ENCODE measurements at regions of chr7 and their contacts with region 1.

Region 1: GRCh38 chr7:111561885-111562732 is at the start of gene IMMP2L:
- DNase-seq: peak; percentile 89
- H3K4me3 ChIP-seq: peak within 1 kb of the TSS; percentile 22 to 63 (median 57)
- H3K27ac ChIP-seq: peak within 1 kb of the TSS; percentile 64
- H3K4me1 ChIP-seq: peaks cover 14% of the 10 kb centered on the region
- H3K27me3 ChIP-seq: peaks cover 0 to 3% of the 10 kb centered on the region in 2 experiments
- CTCF ChIP-seq: peak; percentile 25 to 62
- POLR2A ChIP-seq: peak; percentile 63
- total RNA-seq, gene IMMP2L: 7.9 and 9.9 TPM in 2 replicates

Region 2: DNA sequence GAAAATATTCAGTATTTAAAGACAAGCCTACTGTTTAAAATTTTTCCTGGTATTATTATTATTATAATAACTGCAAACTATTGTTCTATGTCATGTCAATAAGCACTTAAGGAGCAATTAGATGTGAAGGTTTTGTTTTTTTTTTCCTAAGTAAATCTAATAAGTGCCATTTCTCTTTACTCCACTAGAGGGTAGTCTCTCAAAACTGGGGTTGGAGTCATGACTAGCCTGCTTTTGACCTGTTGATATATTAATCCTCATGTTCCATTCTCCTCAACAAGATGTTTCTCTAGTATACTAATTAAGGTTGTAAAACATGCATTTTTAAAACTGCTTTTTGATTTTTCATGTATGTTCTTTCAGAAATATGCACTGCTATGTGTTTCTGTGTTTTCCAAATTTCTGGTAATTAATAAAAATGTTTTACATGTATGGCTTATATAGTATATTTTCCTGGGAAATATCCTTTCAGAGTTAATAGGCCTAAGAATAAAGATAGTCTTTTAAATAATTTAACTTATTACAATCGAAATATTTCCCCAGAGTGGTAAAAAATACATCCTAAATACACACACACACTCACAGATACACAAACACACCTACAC is 472.2 kb before region 1 on chr7:
- CTCF ChIA-PET with region 1: no interaction called
- POLR2A ChIA-PET with region 1: no interaction called
- dilution Hi-C with region 1: no loop called
- intact Hi-C with region 1: loop called (anchors 5 kb)
- DNase-seq: peak; percentile 54
- H3K4me3 ChIP-seq: no peak overlapping the region
- H3K27ac ChIP-seq: no peak overlapping the region
- H3K4me1 ChIP-seq: peaks cover 3% of the 10 kb centered on the region
- H3K27me3 ChIP-seq: no peaks in the 10 kb centered on the region
- CTCF ChIP-seq: peak; percentile 44 to 52
- POLR2A ChIP-seq: no peak

Region 3: GRCh38 chr7:111126987-111127386 is 435.1 kb before region 1 on chr7:
- CTCF ChIA-PET with region 1: no interaction called
- POLR2A ChIA-PET with region 1: interaction called, 10 read pairs
- dilution Hi-C with region 1: no loop called
- intact Hi-C with region 1: no loop called
- DNase-seq: peak; percentile 9
- H3K4me3 ChIP-seq: no peak overlapping the region
- H3K27ac ChIP-seq: no peak overlapping the region
- H3K4me1 ChIP-seq: no peaks in the 10 kb centered on the region
- H3K27me3 ChIP-seq: no peaks in the 10 kb centered on the region
- CTCF ChIP-seq: no peak
- POLR2A ChIP-seq: no peak

Measured in endothelial cell of umbilical vein (primary cell).